Sigmoid colon (tissue), 7 donors: ENCODE measurements at regions of chr1 and their contacts with region 1.

Region 1: GRCh38 chr1:155172732-155173477 is at the start of gene KRTCAP2:
- DNase-seq: peak; percentile 98
- H3K4me3 ChIP-seq: peak within 1 kb of the TSS; percentile 50 to 83 (median 75)
- H3K27ac ChIP-seq: peak within 1 kb of the TSS; percentile 91 to 97 (median 94)
- H3K4me1 ChIP-seq: peaks cover 0 to 42% (median 28%) of the 10 kb centered on the region in 4 donors
- H3K27me3 ChIP-seq: peaks cover 12 to 29% (median 20%) of the 10 kb centered on the region in 3 donors
- CTCF ChIP-seq: peak; percentile 78 to 92 (median 90)
- EP300 ChIP-seq: peak in 1 of 4 donors; percentile 3
- POLR2A ChIP-seq: peak; percentile 53 to 54
- total RNA-seq, gene KRTCAP2: 72.9 to 119 (median 110) TPM

Region 2: GRCh38 chr1:155135415-155136028 is 37.4 kb before region 1 on chr1 and contains the start of gene SLC50A1:
- intact Hi-C with region 1: loop called (anchors 5 kb)
- DNase-seq: peak; percentile 98
- H3K4me3 ChIP-seq: peak within 1 kb of the TSS; percentile 52 to 72 (median 70)
- H3K27ac ChIP-seq: peak within 1 kb of the TSS; percentile 94 to 99 (median 98)
- H3K4me1 ChIP-seq: peaks cover 0 to 60% (median 41%) of the 10 kb centered on the region in 4 donors
- H3K27me3 ChIP-seq: no peaks in the 10 kb centered on the region
- CTCF ChIP-seq: peak in 3 of 4 experiments; percentile 41 to 79 (median 78)
- EP300 ChIP-seq: no peak
- POLR2A ChIP-seq: peak; percentile 72 to 90
- total RNA-seq, gene SLC50A1: 8.0 to 21.4 (median 14.0) TPM

Region 3: DNA sequence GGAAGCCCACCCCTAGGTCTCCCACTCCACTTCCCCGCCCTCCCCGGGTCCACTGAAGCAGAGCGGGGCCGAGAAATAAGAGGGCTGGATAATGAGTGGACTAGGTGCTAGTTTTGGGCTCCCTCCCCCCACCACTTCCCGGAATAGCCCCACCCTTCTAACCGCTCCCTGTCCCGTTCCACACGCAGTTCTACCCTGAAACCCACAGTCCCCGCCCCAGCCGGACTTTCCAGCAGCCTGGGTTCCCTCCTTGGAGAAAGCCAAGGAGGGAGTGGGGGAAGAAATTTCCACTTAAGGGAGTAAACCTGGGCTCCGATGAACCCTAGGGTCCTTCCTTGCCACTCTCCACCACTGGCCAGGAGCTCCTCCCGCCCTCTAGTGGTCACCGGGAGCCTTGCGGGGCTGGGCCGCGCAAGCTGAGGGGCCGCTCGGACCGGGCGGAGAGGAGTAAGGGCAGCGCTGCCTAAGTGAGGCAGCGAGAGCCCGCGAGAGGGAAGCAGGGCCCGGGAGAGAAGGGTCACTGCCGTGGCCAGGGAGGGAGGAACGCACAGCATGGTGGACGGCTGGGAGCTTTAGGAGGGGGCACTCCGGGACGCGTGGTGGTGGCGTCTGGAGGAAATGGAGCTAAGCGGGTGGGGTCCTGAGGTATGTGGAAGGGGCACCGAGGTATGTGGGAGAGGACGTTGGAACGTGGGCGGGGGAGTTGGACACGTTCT is 20.5 kb after region 1 on chr1:
- intact Hi-C with region 1: loop called (anchors 1 kb)
- DNase-seq: peak; percentile 94
- H3K4me3 ChIP-seq: peak overlapping the region; percentile 47 to 69 (median 60)
- H3K27ac ChIP-seq: peak overlapping the region; percentile 90 to 97 (median 92)
- H3K4me1 ChIP-seq: peaks cover 0 to 42% (median 36%) of the 10 kb centered on the region in 4 donors
- H3K27me3 ChIP-seq: no peaks in the 10 kb centered on the region
- CTCF ChIP-seq: peak; percentile 96 to 98 (median 96)
- EP300 ChIP-seq: no peak
- POLR2A ChIP-seq: peak in 1 of 2 donors; percentile 43

Region 4: DNA sequence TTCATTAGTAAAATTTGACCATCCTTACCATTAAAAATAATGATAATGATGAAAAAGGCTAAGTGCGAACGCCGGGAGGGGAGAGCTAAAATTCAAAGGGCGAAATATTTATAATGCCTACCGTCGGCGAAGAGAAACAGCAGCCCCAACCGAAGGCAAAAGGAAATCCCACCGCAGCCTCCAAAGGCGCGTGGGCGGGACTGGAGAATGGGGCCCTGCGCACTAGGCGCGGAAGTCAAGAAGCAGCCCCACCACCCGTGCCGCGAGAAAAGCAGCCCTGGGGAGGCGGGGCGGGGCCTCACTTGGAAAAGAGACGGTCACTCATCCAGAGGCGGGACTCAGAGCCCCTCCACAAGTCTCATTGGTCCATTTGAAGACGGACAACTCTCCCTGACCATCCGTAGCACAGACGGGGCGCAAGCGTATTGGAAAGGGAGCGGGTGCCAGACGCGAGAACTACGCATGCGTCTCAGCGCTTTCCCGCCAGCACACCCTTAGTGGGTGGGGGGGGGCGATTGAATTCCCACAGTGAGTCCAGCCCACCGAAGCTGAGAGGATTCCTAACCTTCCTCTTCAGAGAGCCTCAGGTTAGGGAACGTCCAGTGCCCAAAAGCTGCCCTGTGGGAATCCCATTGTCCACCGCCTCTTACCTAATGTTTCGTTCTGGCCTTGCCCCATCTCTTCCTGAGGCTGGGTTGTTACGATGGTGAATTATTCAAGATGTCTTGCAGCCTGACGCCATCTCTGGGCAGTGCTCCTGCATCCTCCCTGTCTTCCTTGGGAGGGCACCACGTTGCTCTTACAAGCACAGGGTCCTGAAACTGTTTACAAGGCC is 54.6 kb after region 1 on chr1:
- intact Hi-C with region 1: loop called (anchors 5 kb)
- DNase-seq: peak; percentile 99
- H3K4me3 ChIP-seq: peak overlapping the region; percentile 28 to 63 (median 56)
- H3K27ac ChIP-seq: peak overlapping the region; percentile 85 to 93 (median 90)
- H3K4me1 ChIP-seq: peaks cover 0 to 48% (median 40%) of the 10 kb centered on the region in 4 donors
- H3K27me3 ChIP-seq: no peaks in the 10 kb centered on the region
- CTCF ChIP-seq: no peak
- EP300 ChIP-seq: no peak
- POLR2A ChIP-seq: peak; percentile 42 to 46

Region 5: GRCh38 chr1:155648551-155649147 is 475.7 kb after region 1 on chr1:
- intact Hi-C with region 1: no loop called
- DNase-seq: no peak
- H3K4me3 ChIP-seq: no peak overlapping the region
- H3K27ac ChIP-seq: peak overlapping the region; percentile 50 to 67 (median 64)
- H3K4me1 ChIP-seq: peaks cover 0 to 42% (median 34%) of the 10 kb centered on the region in 4 donors
- H3K27me3 ChIP-seq: no peaks in the 10 kb centered on the region
- CTCF ChIP-seq: peak; percentile 14 to 34 (median 28)
- EP300 ChIP-seq: no peak
- POLR2A ChIP-seq: no peak